Endothelial cell of umbilical vein (primary cell): ENCODE measurements at regions of chr9 and their contacts with region 1.

Region 1: DNA sequence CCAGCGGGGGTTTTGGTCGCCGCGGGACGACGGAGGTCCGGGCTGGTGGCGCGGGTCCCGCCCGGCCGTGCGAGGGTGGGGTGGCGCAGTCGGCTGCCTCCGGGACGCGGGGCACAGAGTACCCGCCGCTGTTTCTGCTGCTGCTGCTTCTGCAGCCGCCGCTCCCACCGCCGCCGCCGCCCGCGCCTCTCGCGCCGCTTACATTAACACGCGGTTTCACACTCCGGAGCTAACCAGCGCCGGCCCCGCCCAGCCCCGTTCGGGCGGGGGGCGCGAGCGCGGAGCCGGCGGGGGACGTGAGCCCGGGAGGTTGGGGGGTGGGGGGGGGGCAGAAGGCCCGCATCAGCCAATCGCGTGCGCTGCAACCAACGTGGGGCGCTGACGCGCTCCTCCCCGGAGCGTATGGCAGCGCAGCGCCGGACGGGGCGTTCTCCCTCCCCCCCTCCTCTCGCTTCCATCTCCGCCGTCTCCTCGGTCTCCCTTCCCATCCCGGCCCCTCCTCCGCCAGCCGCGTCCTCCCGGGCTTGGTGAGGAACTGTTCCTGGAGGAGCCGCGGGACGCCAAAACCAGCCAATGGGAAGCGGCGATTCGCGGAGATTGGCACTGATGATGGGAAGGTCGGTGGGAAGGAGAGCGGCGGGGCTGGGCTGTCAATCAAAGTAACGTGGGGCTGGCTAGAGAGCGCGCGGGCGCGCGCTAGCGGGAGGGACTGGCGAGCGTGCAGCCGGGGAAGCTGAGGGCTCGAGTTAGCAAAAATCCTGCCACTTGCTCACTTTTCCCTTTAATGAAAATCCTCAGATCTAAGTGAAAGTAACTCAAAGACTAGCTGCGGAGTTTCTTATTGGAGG is at the start of gene TLE1:
- DNase-seq: peak; percentile 100
- H3K4me3 ChIP-seq: peak within 1 kb of the TSS; percentile 78 to 96 (median 88)
- H3K27ac ChIP-seq: peak within 1 kb of the TSS; percentile 67
- H3K4me1 ChIP-seq: peaks cover 28% of the 10 kb centered on the region
- H3K27me3 ChIP-seq: peaks cover 3 to 5% of the 10 kb centered on the region in 2 experiments
- CTCF ChIP-seq: no peak
- POLR2A ChIP-seq: peak; percentile 31
- total RNA-seq, gene TLE1: 58.2 and 60.8 TPM in 2 replicates

Region 2: DNA sequence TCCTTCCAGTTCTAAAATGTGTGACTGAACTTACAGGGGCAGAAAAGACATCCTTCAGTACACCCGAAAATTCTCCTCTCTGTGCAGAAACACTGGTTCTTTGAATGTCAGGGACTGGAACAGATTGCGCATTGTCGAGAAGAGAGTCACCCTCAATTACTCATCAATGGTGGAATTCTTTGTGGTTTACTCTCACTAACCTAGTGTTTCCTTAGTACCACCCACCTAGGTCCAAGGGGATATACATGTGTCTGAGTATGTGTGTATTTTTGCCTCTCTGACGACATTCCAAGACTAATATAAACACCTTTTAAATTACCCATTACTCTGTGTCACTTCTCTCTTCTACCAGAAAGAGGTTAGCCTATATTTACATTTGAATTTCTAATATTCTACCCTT is 661.1 kb before region 1 on chr9:
- CTCF ChIA-PET with region 1: no interaction called
- POLR2A ChIA-PET with region 1: no interaction called
- dilution Hi-C with region 1: no loop called
- intact Hi-C with region 1: loop called (anchors 1 kb)
- DNase-seq: peak; percentile 61
- H3K4me3 ChIP-seq: no peak overlapping the region
- H3K27ac ChIP-seq: peak overlapping the region; percentile 42
- H3K4me1 ChIP-seq: peaks cover 6% of the 10 kb centered on the region
- H3K27me3 ChIP-seq: no peaks in the 10 kb centered on the region
- CTCF ChIP-seq: no peak
- POLR2A ChIP-seq: no peak

Region 3: DNA sequence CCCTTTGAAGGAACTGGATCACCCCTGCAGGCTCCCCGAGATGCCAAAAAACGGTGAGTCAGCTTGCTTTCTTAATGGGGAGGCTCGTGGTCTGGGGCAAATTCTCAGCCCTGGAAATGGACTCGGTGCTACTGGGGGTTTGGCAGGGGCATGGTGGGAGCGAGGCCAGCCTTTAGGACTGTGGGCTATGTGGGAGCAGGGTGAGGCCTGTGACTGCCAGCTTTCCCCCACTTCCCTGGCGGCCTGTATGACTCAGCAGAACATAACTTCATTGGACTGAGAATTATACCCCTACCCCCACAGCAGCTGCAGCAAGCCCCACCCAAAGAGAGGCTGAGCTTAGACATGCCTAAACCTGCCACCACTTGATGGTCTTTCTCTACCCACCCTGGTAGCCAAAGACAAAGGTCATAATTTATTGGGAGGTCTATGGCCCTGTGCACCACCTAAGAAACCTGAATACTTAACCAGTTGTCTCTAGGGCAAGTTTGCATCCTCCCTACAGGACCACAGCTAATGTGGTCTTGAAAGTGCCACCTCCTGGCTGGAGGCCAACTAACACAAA is 325.6 kb before region 1 on chr9:
- CTCF ChIA-PET with region 1: no interaction called
- POLR2A ChIA-PET with region 1: no interaction called
- dilution Hi-C with region 1: no loop called
- intact Hi-C with region 1: no loop called
- DNase-seq: no peak
- H3K4me3 ChIP-seq: no peak overlapping the region
- H3K27ac ChIP-seq: no peak overlapping the region
- H3K4me1 ChIP-seq: no peaks in the 10 kb centered on the region
- H3K27me3 ChIP-seq: no peaks in the 10 kb centered on the region
- CTCF ChIP-seq: no peak
- POLR2A ChIP-seq: no peak

Region 4: GRCh38 chr9:81521892-81522291 is 167.7 kb before region 1 on chr9:
- CTCF ChIA-PET with region 1: interaction called, 34 read pairs
- POLR2A ChIA-PET with region 1: no interaction called
- dilution Hi-C with region 1: no loop called
- intact Hi-C with region 1: loop called (anchors 1 kb)
- DNase-seq: no peak
- H3K4me3 ChIP-seq: no peak overlapping the region
- H3K27ac ChIP-seq: no peak overlapping the region
- H3K4me1 ChIP-seq: peaks cover 8% of the 10 kb centered on the region
- H3K27me3 ChIP-seq: no peaks in the 10 kb centered on the region
- CTCF ChIP-seq: no peak
- POLR2A ChIP-seq: no peak

Region 5: GRCh38 chr9:81588148-81588871 is 101.3 kb before region 1 on chr9:
- CTCF ChIA-PET with region 1: no interaction called
- POLR2A ChIA-PET with region 1: no interaction called
- dilution Hi-C with region 1: no loop called
- intact Hi-C with region 1: loop called (anchors 1 kb)
- DNase-seq: peak; percentile 94
- H3K4me3 ChIP-seq: no peak overlapping the region
- H3K27ac ChIP-seq: peak overlapping the region; percentile 84
- H3K4me1 ChIP-seq: peaks cover 20% of the 10 kb centered on the region
- H3K27me3 ChIP-seq: no peaks in the 10 kb centered on the region
- CTCF ChIP-seq: no peak
- POLR2A ChIP-seq: no peak

Region 6: DNA sequence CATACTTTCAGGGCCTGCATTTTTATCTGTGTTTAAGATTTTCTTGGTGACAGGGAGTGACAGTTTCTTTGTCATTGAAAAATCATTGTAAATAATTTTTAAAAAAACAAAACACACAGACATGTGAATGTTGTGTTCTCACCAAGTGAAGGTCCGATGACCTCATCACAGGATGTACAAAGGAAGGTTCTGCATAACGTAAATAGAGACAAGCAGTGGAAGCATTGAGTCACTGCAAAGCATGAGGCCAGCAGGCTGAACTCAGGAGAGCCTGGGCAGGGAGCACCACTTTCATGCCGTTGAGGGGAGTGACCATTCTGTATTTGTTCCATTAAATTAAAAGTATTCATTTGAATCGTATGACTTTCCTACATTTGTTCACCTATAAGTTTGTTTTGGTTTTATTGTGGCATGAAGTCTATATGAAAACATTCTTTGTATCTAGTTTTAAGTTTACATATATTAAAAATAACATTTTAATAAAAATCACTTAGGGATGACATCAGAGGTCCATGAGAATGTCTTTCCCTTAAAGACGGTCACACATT is 70.2 kb after region 1 on chr9:
- CTCF ChIA-PET with region 1: no interaction called
- POLR2A ChIA-PET with region 1: no interaction called
- dilution Hi-C with region 1: no loop called
- intact Hi-C with region 1: loop called (anchors 1 kb)
- DNase-seq: peak; percentile 95
- H3K4me3 ChIP-seq: no peak overlapping the region
- H3K27ac ChIP-seq: peak overlapping the region; percentile 91
- H3K4me1 ChIP-seq: peaks cover 11% of the 10 kb centered on the region
- H3K27me3 ChIP-seq: no peaks in the 10 kb centered on the region
- CTCF ChIP-seq: no peak
- POLR2A ChIP-seq: no peak

Region 7: GRCh38 chr9:81874931-81875330 is 185.4 kb after region 1 on chr9:
- CTCF ChIA-PET with region 1: no interaction called
- POLR2A ChIA-PET with region 1: interaction called, 5 read pairs
- dilution Hi-C with region 1: no loop called
- intact Hi-C with region 1: loop called (anchors 1 kb)
- DNase-seq: peak; percentile 97
- H3K4me3 ChIP-seq: no peak overlapping the region
- H3K27ac ChIP-seq: peak overlapping the region; percentile 95
- H3K4me1 ChIP-seq: peaks cover 38% of the 10 kb centered on the region
- H3K27me3 ChIP-seq: no peaks in the 10 kb centered on the region
- CTCF ChIP-seq: no peak
- POLR2A ChIP-seq: no peak

Region 8: DNA sequence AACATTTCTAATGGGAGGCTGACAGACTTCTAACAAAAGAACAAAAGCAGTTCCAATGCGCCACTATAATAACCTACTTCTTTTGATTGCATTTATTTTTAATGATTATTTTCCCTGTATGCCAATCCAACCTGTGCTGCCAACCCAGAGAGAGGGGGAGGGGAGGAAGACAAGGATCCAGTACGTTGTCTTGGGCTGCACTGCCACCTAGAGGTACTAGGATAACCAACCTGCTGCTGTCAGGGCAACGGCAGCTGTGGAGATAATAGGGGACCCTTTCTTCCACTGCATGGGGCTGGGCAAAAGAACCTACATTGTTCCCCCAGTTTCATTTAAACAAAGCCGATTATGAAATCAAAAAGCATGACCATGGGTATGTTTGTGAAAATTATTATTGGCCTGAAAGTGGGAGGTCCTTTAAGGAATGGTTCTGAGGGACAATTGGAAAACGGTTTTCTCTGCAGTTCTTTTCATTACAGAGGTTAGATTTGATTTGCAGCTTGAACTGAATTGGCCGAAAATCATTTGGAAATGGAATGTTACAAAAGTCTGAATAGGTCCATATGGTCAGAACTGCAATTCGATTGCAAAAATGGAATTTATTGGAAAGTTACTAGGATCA is 1272.0 kb after region 1 on chr9:
- CTCF ChIA-PET with region 1: no interaction called
- POLR2A ChIA-PET with region 1: no interaction called
- dilution Hi-C with region 1: no loop called
- intact Hi-C with region 1: loop called (anchors 5 kb)
- DNase-seq: peak; percentile 74
- H3K4me3 ChIP-seq: no peak overlapping the region
- H3K27ac ChIP-seq: no peak overlapping the region
- H3K4me1 ChIP-seq: no peaks in the 10 kb centered on the region
- H3K27me3 ChIP-seq: peaks cover 0 to 4% of the 10 kb centered on the region in 2 experiments
- CTCF ChIP-seq: peak; percentile 75 to 81
- POLR2A ChIP-seq: no peak